ENCODE measurements at regions of chr20 and their contacts with region 1.

Region 1: GRCh38 chr20:59403261-59403961 is 103.0 kb downstream of the EDN3 start:
- DNase-seq: peak; percentile 65 to 91 (median 77)
- ATAC-seq: peak; percentile 93
- H3K4me3 ChIP-seq: peak overlapping the region; percentile 53
- H3K4me3 Mint-ChIP-seq: peak overlapping the region in 1 of 10 donors; percentile 59
- H3K27ac ChIP-seq: peak overlapping the region; percentile 41
- H3K27ac Mint-ChIP-seq: peak overlapping the region in 4 of 9 donors; percentile 49 to 94 (median 85)
- H3K4me1 ChIP-seq: peaks cover 12 to 35% of the 10 kb centered on the region in 2 donors
- H3K4me1 Mint-ChIP-seq: peaks cover 0 to 4% (median 2%) of the 10 kb centered on the region in 7 donors
- H3K27me3 ChIP-seq: peaks cover 0 to 7% of the 10 kb centered on the region in 2 donors
- H3K27me3 Mint-ChIP-seq: peaks cover 0 to 18% (median 3%) of the 10 kb centered on the region in 5 donors

Region 2: DNA sequence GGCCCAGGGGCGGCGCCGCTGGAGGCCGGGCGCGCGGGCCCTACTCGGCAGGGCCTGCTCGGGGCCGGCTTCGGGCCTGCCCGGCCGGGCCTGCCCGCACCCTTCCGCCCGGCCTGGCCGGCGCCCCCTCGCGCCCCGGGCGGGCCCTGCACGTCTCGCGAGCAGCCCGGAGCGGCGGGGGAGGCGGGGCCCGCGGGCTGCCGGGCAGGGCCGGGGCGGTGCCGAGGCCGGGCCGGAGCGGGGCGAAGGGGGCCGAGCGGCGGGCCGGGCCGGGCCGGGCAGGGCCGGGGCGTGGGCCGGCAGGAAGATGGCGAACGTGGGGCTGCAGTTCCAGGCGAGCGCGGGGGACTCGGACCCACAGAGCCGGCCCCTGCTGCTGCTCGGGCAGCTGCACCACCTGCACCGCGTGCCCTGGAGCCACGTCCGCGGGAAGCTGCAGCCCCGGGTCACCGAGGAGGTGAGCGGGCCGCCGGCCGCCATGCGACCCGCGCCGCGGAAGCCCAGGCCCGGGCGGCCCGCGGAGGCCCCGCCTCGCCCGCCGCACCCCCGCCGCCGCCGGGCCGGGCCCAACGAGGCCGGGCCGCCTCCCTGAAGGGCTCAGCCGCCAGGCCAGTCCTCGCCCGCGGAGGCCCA is 710.7 kb before region 1 on chr20 and contains the start of gene NPEPL1:
- CTCF ChIA-PET with region 1: no interaction called
- POLR2A ChIA-PET with region 1: no interaction called
- intact Hi-C with region 1: loop called in 1 of 2 experiments (anchors 2 kb)
- DNase-seq: peak; percentile 37 to 85 (median 55)
- ATAC-seq: peak; percentile 93
- H3K4me3 ChIP-seq: peak within 1 kb of the TSS; percentile 19
- H3K4me3 Mint-ChIP-seq: peak within 1 kb of the TSS; percentile 58 to 89 (median 81)
- H3K27ac ChIP-seq: peak within 1 kb of the TSS; percentile 68
- H3K27ac Mint-ChIP-seq: peak within 1 kb of the TSS; percentile 63 to 87 (median 80)
- H3K4me1 ChIP-seq: peaks cover 4 to 7% of the 10 kb centered on the region in 2 donors
- H3K4me1 Mint-ChIP-seq: peaks cover 4 to 19% (median 10%) of the 10 kb centered on the region in 7 donors
- H3K27me3 ChIP-seq: no peaks in the 10 kb centered on the region
- H3K27me3 Mint-ChIP-seq: no peaks in the 10 kb centered on the region
- total RNA-seq, gene NPEPL1: 32.8 to 76.2 (median 50.5) TPM

Region 3: GRCh38 chr20:59055295-59055694 is 348.1 kb before region 1 on chr20:
- CTCF ChIA-PET with region 1: interaction called, 3 read pairs
- POLR2A ChIA-PET with region 1: no interaction called
- intact Hi-C with region 1: loop called in 1 of 2 experiments (anchors 1 kb)
- DNase-seq: peak in 4 of 9 donors; percentile 5 to 25 (median 14)
- ATAC-seq: no peak
- H3K4me3 ChIP-seq: no peak overlapping the region
- H3K4me3 Mint-ChIP-seq: no peak overlapping the region
- H3K27ac ChIP-seq: no peak overlapping the region
- H3K27ac Mint-ChIP-seq: no peak overlapping the region
- H3K4me1 ChIP-seq: no peaks in the 10 kb centered on the region
- H3K4me1 Mint-ChIP-seq: no peaks in the 10 kb centered on the region
- H3K27me3 ChIP-seq: peaks cover 4 to 5% of the 10 kb centered on the region in 2 donors
- H3K27me3 Mint-ChIP-seq: peaks cover 10 to 59% (median 15%) of the 10 kb centered on the region in 5 donors

Region 4: GRCh38 chr20:59087829-59088433 is 315.5 kb before region 1 on chr20:
- CTCF ChIA-PET with region 1: interaction called, 5 read pairs
- POLR2A ChIA-PET with region 1: no interaction called
- intact Hi-C with region 1: loop called (anchors 1 kb)
- DNase-seq: peak; percentile 67 to 85 (median 78)
- ATAC-seq: peak; percentile 92
- H3K4me3 ChIP-seq: no peak overlapping the region
- H3K4me3 Mint-ChIP-seq: no peak overlapping the region
- H3K27ac ChIP-seq: no peak overlapping the region
- H3K27ac Mint-ChIP-seq: peak overlapping the region in 4 of 9 donors; percentile 10 to 58 (median 40)
- H3K4me1 ChIP-seq: peaks cover 0 to 5% of the 10 kb centered on the region in 2 donors
- H3K4me1 Mint-ChIP-seq: peaks cover 0 to 7% (median 5%) of the 10 kb centered on the region in 7 donors
- H3K27me3 ChIP-seq: no peaks in the 10 kb centered on the region
- H3K27me3 Mint-ChIP-seq: peaks cover 0 to 32% (median 0%) of the 10 kb centered on the region in 5 donors

Region 5: GRCh38 chr20:59159493-59160376 is 243.7 kb before region 1 on chr20:
- CTCF ChIA-PET with region 1: no interaction called
- POLR2A ChIA-PET with region 1: no interaction called
- intact Hi-C with region 1: loop called in 1 of 2 experiments (anchors 2 kb)
- DNase-seq: peak in 8 of 9 donors; percentile 50 to 86 (median 82)
- ATAC-seq: peak; percentile 93
- H3K4me3 ChIP-seq: peak overlapping the region; percentile 55
- H3K4me3 Mint-ChIP-seq: peak overlapping the region; percentile 76 to 93 (median 89)
- H3K27ac ChIP-seq: peak overlapping the region; percentile 93
- H3K27ac Mint-ChIP-seq: peak overlapping the region; percentile 95 to 99 (median 98)
- H3K4me1 ChIP-seq: peaks cover 55 to 79% of the 10 kb centered on the region in 2 donors
- H3K4me1 Mint-ChIP-seq: peaks cover 49 to 95% (median 89%) of the 10 kb centered on the region in 7 donors
- H3K27me3 ChIP-seq: no peaks in the 10 kb centered on the region
- H3K27me3 Mint-ChIP-seq: no peaks in the 10 kb centered on the region

Region 6: GRCh38 chr20:59253779-59254319 is 149.6 kb before region 1 on chr20:
- CTCF ChIA-PET with region 1: no interaction called
- POLR2A ChIA-PET with region 1: no interaction called
- intact Hi-C with region 1: loop called in 1 of 2 experiments (anchors 1 kb)
- DNase-seq: peak in 7 of 9 donors; percentile 10 to 41 (median 25)
- ATAC-seq: peak; percentile 63
- H3K4me3 ChIP-seq: peak overlapping the region; percentile 27
- H3K4me3 Mint-ChIP-seq: peak overlapping the region; percentile 66 to 83 (median 73)
- H3K27ac ChIP-seq: peak overlapping the region; percentile 58
- H3K27ac Mint-ChIP-seq: peak overlapping the region; percentile 83 to 97 (median 93)
- H3K4me1 ChIP-seq: peaks cover 43 to 45% of the 10 kb centered on the region in 2 donors
- H3K4me1 Mint-ChIP-seq: peaks cover 50 to 82% (median 66%) of the 10 kb centered on the region in 7 donors
- H3K27me3 ChIP-seq: no peaks in the 10 kb centered on the region
- H3K27me3 Mint-ChIP-seq: no peaks in the 10 kb centered on the region

Region 7: GRCh38 chr20:59371431-59371830 is 32.0 kb before region 1 on chr20:
- CTCF ChIA-PET with region 1: no interaction called
- POLR2A ChIA-PET with region 1: no interaction called
- intact Hi-C with region 1: no loop called
- DNase-seq: no peak
- ATAC-seq: no peak
- H3K4me3 ChIP-seq: no peak overlapping the region
- H3K4me3 Mint-ChIP-seq: no peak overlapping the region
- H3K27ac ChIP-seq: no peak overlapping the region
- H3K27ac Mint-ChIP-seq: no peak overlapping the region
- H3K4me1 ChIP-seq: no peaks in the 10 kb centered on the region
- H3K4me1 Mint-ChIP-seq: peaks cover 0 to 2% (median 0%) of the 10 kb centered on the region in 7 donors
- H3K27me3 ChIP-seq: no peaks in the 10 kb centered on the region
- H3K27me3 Mint-ChIP-seq: peaks cover 0 to 14% (median 9%) of the 10 kb centered on the region in 5 donors

Region 8: GRCh38 chr20:59385480-59385879 is 17.9 kb before region 1 on chr20:
- CTCF ChIA-PET with region 1: interaction called, 4 read pairs
- POLR2A ChIA-PET with region 1: interaction called, 3 read pairs
- intact Hi-C with region 1: loop called in 1 of 2 experiments (anchors 2 kb)
- DNase-seq: peak in 5 of 9 donors; percentile 20 to 42 (median 29)
- ATAC-seq: peak; percentile 77
- H3K4me3 ChIP-seq: no peak overlapping the region
- H3K4me3 Mint-ChIP-seq: peak overlapping the region in 6 of 10 donors; percentile 11 to 52 (median 38)
- H3K27ac ChIP-seq: no peak overlapping the region
- H3K27ac Mint-ChIP-seq: peak overlapping the region; percentile 60 to 85 (median 70)
- H3K4me1 ChIP-seq: peaks cover 4 to 9% of the 10 kb centered on the region in 2 donors
- H3K4me1 Mint-ChIP-seq: peaks cover 0 to 13% (median 8%) of the 10 kb centered on the region in 7 donors
- H3K27me3 ChIP-seq: no peaks in the 10 kb centered on the region
- H3K27me3 Mint-ChIP-seq: peaks cover 0 to 4% (median 0%) of the 10 kb centered on the region in 5 donors